Tibial artery (tissue), 4 donors: ENCODE measurements at regions of chr9 and their contacts with region 1.

Region 1: DNA sequence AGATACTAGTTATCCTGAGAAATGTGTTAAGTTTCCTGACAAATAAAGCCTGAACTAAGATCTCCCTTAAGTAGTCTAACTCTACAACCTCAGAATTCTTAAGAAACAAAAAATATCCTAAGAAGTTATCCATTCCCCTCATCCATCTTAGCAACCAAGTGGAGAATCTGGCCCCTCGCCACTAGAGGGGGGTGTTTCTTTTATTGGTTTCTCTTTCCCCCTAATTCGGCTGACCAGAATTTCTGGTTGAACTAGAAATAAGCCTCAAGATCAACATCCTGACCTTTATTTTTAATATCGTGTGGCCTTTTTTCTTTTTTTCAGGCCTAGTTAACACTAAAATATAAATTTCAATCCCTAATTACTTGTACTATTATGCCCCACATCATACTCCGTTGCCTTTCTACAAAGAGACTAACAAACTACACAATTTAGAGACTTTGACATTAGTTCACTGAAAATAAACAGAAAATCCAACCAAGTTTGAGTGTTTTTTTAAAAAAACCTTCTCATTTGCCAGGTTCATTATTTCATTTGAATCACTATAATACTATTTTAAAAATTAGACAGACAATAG is 14.3 kb upstream of the NR4A3 start:
- DNase-seq: peak; percentile 81 to 83
- H3K4me3 ChIP-seq: no peak overlapping the region
- H3K27ac ChIP-seq: peak overlapping the region in 1 of 2 donors; percentile 14
- H3K4me1 ChIP-seq: no peaks in the 10 kb centered on the region
- H3K27me3 ChIP-seq: no peaks in the 10 kb centered on the region
- CTCF ChIP-seq: peak; percentile 64 to 72

Region 2: GRCh38 chr9:99184475-99185347 is 622.7 kb before region 1 on chr9:
- intact Hi-C with region 1: loop called (anchors 10 kb)
- DNase-seq: peak; percentile 91 to 95
- H3K4me3 ChIP-seq: peak overlapping the region; percentile 14 to 31
- H3K27ac ChIP-seq: peak overlapping the region; percentile 8 to 51
- H3K4me1 ChIP-seq: peaks cover 0 to 11% (median 3%) of the 10 kb centered on the region in 4 donors
- H3K27me3 ChIP-seq: peaks cover 0 to 6% of the 10 kb centered on the region in 2 donors
- CTCF ChIP-seq: peak; percentile 88 to 96

Region 3: DNA sequence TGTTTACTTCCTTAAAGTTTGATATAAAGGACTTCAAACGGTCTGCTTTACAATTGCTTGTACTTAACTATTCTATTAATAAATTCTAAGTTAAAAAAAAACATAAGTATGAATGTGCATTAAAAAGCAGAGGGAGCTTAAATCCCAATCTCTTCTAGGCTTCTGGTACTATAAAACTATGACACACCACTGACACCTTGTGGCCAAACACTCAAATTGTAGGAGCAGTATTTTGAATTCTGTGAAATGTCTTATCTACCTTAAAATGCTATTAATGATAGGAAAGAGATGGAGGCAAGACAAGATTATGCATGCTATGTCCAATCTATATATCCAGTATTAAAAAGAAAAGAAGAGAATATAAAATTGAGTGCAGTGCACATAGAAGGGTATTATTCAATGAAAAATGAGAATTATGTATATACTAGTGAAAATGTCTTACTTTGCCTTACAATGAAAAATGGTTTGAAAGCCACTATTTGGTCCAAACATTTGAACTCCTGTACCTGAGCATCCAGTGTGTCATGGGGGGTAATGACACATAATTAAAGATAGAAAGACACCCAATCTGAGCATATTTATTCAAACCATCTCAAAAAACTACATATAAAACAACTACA is 203.8 kb after region 1 on chr9:
- intact Hi-C with region 1: loop called (anchors 10 kb)
- DNase-seq: no peak
- H3K4me3 ChIP-seq: no peak overlapping the region
- H3K27ac ChIP-seq: no peak overlapping the region
- H3K4me1 ChIP-seq: no peaks in the 10 kb centered on the region
- H3K27me3 ChIP-seq: no peaks in the 10 kb centered on the region
- CTCF ChIP-seq: peak; percentile 26 to 32